A549 (cell line): ENCODE measurements at regions of chr20 and their contacts with region 1.

Region 1: GRCh38 chr20:35741892-35742740 is at the start of gene RBM39:
- DNase-seq: peak; percentile 95 to 100
- ATAC-seq: peak; percentile 93 to 95
- H3K4me3 ChIP-seq: peak within 1 kb of the TSS; percentile 87
- H3K27ac ChIP-seq: peak within 1 kb of the TSS; percentile 98
- H3K4me1 ChIP-seq: peaks cover 45% of the 10 kb centered on the region
- CTCF ChIP-seq: no peak
- EP300 ChIP-seq: peak in 1 of 2 experiments; percentile 49; a peak in 1 of 5 replicates
- POLR2A ChIP-seq: peak; percentile 89
- RAD21 ChIP-seq: 0 out of 5 replicates have a peak, but pooled peaks of 1 of the 2 experiments have one; percentile 18
- polyA plus RNA-seq, gene RBM39: 127 and 264 TPM in 2 replicates

Region 2: DNA sequence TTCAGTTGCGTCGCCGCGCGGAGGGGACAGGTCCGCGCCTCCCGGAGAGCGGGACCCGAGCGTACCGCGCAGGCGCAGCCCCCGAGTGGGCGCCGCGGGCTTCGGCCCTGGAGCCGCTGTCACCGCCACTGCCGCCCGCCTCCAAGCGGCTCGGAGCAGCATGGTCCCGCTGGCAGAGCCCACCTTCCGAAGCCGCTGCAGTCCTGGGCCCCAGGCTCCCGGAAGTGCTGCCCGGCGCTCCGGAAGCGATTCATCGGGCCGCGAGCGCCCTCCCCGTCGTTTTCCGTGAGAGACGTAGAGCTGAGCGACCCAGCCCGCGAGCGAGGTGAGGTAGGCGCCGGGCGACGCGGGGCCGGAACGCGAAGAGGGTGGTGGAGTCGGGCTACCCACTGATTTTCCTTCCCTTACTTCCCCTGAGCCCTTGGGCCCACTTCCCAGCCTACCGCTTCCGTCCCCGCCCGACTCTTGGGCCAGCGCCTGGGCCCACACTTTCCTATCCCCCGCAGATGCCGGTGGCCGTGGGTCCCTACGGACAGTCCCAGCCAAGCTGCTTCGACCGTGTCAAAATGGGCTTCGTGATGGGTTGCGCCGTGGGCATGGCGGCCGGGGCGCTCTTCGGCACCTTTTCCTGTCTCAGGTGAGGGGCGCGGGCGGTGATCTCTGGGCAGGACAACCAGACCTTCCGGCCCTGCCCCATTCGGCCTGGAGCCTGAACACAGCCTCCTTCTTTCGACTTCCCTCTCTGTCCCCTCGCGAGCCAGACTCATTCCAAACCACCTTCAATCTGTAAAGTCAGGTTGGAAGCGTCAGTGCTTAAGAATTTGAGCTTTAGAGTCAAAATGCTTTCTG is 42.8 kb before region 1 on chr20 and contains the starts of genes NFS1 and ROMO1:
- CTCF ChIA-PET with region 1: interaction called, 4 read pairs
- POLR2A ChIA-PET with region 1: interaction called, 11 read pairs
- DNase-seq: peak; percentile 81 to 91
- ATAC-seq: peak; percentile 79 to 90
- H3K4me3 ChIP-seq: peak within 1 kb of the TSS; percentile 90
- H3K27ac ChIP-seq: peak within 1 kb of the TSS; percentile 94 to 95
- H3K4me1 ChIP-seq: peaks cover 28% of the 10 kb centered on the region
- CTCF ChIP-seq: 0 out of 3 replicates have a peak, but pooled peaks have one; percentile 10
- EP300 ChIP-seq: no peak
- POLR2A ChIP-seq: peak; percentile 79
- RAD21 ChIP-seq: peak in 1 of 2 experiments; percentile 17; a peak in 1 of 5 replicates
- polyA plus RNA-seq, gene NFS1: 50.5 and 72.0 TPM in 2 replicates
- polyA plus RNA-seq, gene ROMO1: 201 and 204 TPM in 2 replicates

Region 3: DNA sequence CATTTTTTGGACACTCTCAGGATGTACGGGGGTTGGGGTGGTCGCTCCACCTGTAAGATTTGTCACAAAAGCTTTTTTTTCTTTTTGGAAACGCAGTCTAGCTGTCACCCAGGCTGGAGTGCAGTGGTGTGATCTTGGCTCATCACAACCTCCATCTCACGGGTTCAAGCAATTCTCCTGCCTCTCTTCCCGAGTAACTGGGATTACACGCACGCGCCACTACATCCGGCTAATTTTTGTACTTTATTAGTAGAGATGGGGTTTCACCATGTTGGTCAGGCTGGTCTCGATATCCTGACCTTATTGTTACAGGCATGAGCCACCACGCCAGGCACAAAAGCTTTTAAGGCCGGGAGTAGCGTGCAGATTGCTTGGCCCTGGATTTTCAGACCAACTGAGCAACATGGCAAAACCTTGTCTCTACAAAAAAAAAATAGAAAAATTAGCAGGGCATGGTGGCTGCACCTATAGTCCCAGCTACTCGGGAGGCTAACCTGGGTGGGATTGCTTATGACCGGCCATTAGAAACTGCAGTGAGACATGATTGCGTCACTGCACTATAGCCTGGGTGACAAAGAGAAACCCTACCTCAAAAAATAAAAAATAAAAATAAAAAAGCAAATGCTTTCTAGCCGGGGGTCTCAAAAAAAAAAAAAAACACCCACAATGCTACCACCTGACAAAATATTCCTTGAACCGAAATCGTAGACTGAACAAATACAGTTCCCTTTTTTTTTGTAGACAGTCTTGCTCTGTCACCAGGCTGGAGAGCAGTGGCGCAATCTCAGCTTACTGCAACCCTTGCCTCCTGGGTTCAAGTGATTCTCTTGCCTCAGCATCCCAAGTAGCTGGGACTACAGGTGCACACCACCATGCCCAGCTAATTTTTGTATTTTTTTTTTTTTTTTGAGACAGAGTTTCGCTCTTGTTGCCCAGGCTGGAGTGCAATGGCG is 15.1 kb before region 1 on chr20:
- CTCF ChIA-PET with region 1: interaction called, 14 read pairs
- POLR2A ChIA-PET with region 1: interaction called, 38 read pairs
- DNase-seq: no peak
- ATAC-seq: no peak
- H3K4me3 ChIP-seq: no peak overlapping the region
- H3K27ac ChIP-seq: no peak overlapping the region
- H3K4me1 ChIP-seq: peaks cover 19% of the 10 kb centered on the region
- CTCF ChIP-seq: no peak
- EP300 ChIP-seq: no peak
- POLR2A ChIP-seq: no peak
- RAD21 ChIP-seq: no peak

Region 4: GRCh38 chr20:35756404-35756803 is 14.3 kb after region 1 on chr20:
- CTCF ChIA-PET with region 1: interaction called, 4 read pairs
- POLR2A ChIA-PET with region 1: interaction called, 13 read pairs
- DNase-seq: no peak
- ATAC-seq: no peak
- H3K4me3 ChIP-seq: no peak overlapping the region
- H3K27ac ChIP-seq: no peak overlapping the region
- H3K4me1 ChIP-seq: no peaks in the 10 kb centered on the region
- CTCF ChIP-seq: no peak
- EP300 ChIP-seq: no peak
- POLR2A ChIP-seq: no peak
- RAD21 ChIP-seq: no peak

Region 5: GRCh38 chr20:35791821-35792220 is 49.7 kb after region 1 on chr20:
- CTCF ChIA-PET with region 1: no interaction called
- POLR2A ChIA-PET with region 1: no interaction called
- DNase-seq: peak in 1 of 2 experiments; percentile 47
- ATAC-seq: peak; percentile 56 to 75; a peak in 4 of 6 replicates
- H3K4me3 ChIP-seq: no peak overlapping the region
- H3K27ac ChIP-seq: peak overlapping the region in 1 of 2 experiments; percentile 61; a peak in 2 of 6 replicates
- H3K4me1 ChIP-seq: peaks cover 11% of the 10 kb centered on the region
- CTCF ChIP-seq: no peak
- EP300 ChIP-seq: no peak
- POLR2A ChIP-seq: no peak
- RAD21 ChIP-seq: no peak

Region 6: GRCh38 chr20:35883778-35884540 is 141.8 kb after region 1 on chr20:
- CTCF ChIA-PET with region 1: interaction called, 31 read pairs
- POLR2A ChIA-PET with region 1: interaction called, 83 read pairs
- DNase-seq: peak; percentile 84 to 97
- ATAC-seq: peak; percentile 93 to 97
- H3K4me3 ChIP-seq: peak overlapping the region; percentile 15
- H3K27ac ChIP-seq: peak overlapping the region; percentile 90 to 93
- H3K4me1 ChIP-seq: peaks cover 58% of the 10 kb centered on the region
- CTCF ChIP-seq: peak; percentile 89
- EP300 ChIP-seq: peak; percentile 30 to 79; a peak in 2 of 5 replicates
- POLR2A ChIP-seq: no peak
- RAD21 ChIP-seq: peak; percentile 91 to 93